Gastrocnemius medialis (tissue), 4 donors: ENCODE measurements at regions of chr20 and their contacts with region 1.

Region 1: DNA sequence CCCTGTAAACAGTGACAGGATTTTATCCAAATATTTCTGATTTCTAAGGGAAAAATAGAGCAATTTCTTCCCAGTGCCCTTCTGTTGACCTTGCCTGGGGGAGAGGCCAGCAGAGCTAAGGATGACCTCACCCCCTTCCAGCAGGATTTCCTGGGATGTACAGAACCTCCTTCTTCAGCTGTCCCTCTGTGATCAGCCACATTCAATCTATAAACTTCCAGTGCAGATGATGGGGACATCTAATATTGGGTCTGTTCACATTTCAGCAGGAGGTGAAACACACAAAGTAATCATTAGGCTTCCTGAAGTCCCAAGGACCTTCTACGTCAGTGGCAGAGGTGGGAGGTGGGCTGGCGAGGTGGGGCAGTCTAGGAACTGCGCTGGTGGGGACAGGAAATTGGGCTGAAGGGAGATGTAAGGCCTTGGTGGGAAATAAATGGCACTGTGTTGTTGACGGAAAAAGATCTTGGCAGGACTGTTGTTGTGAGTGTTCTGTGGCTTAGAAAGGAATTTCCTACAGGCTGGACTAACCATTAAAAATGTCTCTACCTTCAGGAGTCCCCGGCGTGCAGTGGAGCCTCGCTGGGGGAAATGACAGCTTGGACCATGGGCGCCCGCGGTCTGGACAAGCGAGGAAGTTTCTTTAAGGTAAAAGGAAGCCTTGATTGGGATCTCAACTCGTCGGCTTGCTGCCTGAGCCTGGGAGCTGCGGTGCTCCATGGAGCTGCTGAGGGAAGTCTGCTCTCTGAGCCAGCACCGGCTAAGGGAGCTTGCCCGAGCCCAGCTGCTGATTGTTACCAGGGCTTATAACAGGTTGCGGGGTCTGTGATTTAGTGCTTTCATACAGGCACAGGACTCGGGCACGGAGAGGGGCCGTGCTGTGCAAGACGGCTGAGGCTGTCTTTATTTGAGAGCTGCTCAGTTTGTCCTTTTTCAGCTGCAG is 127.9 kb upstream of the NAA20 start:
- DNase-seq: peak in 1 of 2 donors; percentile 28
- ATAC-seq: peak; percentile 72 to 82
- H3K4me3 ChIP-seq: peak overlapping the region; percentile 36 to 42 (median 39)
- H3K27ac ChIP-seq: peak overlapping the region; percentile 67 to 80 (median 77)
- H3K4me1 ChIP-seq: peaks cover 50 to 64% of the 10 kb centered on the region in 2 donors
- H3K27me3 ChIP-seq: no peaks in the 10 kb centered on the region
- CTCF ChIP-seq: no peak
- POLR2A ChIP-seq: no peak

Region 2: GRCh38 chr20:19823971-19824370 is 65.3 kb before region 1 on chr20:
- in situ Hi-C with region 1: no loop called
- intact Hi-C with region 1: loop called (anchors 5 kb)
- DNase-seq: no peak
- ATAC-seq: peak; percentile 56 to 72
- H3K4me3 ChIP-seq: peak overlapping the region in 1 of 4 donors; percentile 5
- H3K27ac ChIP-seq: peak overlapping the region; percentile 41 to 66 (median 60)
- H3K4me1 ChIP-seq: peaks cover 3 to 32% of the 10 kb centered on the region in 2 donors
- H3K27me3 ChIP-seq: no peaks in the 10 kb centered on the region
- CTCF ChIP-seq: no peak
- POLR2A ChIP-seq: peak in 1 of 2 donors; percentile 8

Region 3: DNA sequence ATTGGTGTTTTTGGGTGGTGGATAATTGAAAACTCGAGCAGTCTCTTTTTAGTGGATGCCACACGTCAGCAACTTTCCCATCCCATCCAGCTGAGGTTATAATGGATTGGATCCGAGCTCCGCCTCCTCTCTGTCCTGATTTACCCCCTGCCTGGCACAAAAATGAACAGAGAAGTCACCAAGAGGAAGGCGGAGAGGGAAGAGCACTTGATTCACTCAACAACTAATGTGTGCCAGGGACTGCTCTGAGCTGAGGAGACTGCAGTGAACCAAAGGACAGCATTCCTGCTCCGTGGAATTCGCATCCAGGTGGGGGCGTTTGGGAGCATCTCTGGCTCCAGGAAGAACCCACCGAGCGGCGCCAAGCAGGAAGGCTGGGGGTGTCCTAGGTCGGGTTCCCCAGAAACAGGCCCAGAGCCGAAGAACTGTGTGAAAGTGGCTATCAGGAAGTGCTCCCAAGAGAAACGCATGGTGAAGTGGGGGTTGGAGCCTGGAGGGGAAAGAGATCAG is 32.1 kb after region 1 on chr20:
- in situ Hi-C with region 1: no loop called
- intact Hi-C with region 1: loop called (anchors 2 kb)
- DNase-seq: peak; percentile 49 to 81
- ATAC-seq: peak; percentile 89 to 90
- H3K4me3 ChIP-seq: peak overlapping the region; percentile 18 to 42 (median 32)
- H3K27ac ChIP-seq: peak overlapping the region; percentile 73 to 87 (median 82)
- H3K4me1 ChIP-seq: peaks cover 56 to 67% of the 10 kb centered on the region in 2 donors
- H3K27me3 ChIP-seq: no peaks in the 10 kb centered on the region
- CTCF ChIP-seq: no peak
- POLR2A ChIP-seq: no peak

Region 4: GRCh38 chr20:19934792-19935491 is 45.7 kb after region 1 on chr20:
- in situ Hi-C with region 1: loop called in 1 of 4 experiments (anchors 10 kb)
- intact Hi-C with region 1: loop called (anchors 5 kb)
- DNase-seq: peak; percentile 61 to 70
- ATAC-seq: peak; percentile 74 to 82
- H3K4me3 ChIP-seq: peak overlapping the region; percentile 24 to 45 (median 34)
- H3K27ac ChIP-seq: peak overlapping the region; percentile 77 to 83 (median 77)
- H3K4me1 ChIP-seq: peaks cover 27 to 58% of the 10 kb centered on the region in 2 donors
- H3K27me3 ChIP-seq: no peaks in the 10 kb centered on the region
- CTCF ChIP-seq: no peak
- POLR2A ChIP-seq: peak; percentile 27 to 53

Region 5: DNA sequence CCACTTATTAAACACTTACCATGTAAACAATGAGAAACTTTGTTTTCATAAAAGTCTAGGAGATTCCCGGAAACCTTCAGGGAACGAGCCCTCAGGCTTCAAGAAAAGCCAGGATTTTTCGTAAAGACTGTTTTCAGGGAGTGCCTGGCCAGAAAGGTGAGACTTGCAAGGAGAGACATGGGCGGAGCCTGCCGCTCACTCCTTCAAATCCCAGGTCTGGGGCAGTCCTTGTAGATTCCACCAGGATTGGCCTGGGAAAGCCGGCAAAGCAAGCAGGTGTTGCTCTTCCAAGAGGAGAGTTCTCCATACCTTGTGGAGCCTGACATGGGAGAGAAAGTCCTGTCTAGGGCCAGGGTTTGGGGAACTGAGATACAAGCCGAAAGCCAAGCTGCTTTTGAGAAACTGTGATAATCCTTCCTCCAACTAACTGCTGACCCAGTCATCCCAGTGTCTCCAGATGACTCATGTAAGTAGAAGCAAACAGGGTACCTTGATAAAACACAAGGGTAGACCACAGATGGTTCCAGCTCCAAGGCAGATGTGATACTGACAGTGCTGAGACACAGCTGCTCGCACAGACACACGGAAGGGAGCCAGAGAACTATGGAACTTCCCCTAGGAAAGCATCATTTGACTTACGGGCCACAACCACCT is 58.5 kb after region 1 on chr20:
- in situ Hi-C with region 1: loop called in 1 of 4 experiments (anchors 10 kb)
- intact Hi-C with region 1: no loop called
- DNase-seq: no peak
- ATAC-seq: no peak
- H3K4me3 ChIP-seq: no peak overlapping the region
- H3K27ac ChIP-seq: no peak overlapping the region
- H3K4me1 ChIP-seq: peaks cover 18 to 38% of the 10 kb centered on the region in 2 donors
- H3K27me3 ChIP-seq: no peaks in the 10 kb centered on the region
- CTCF ChIP-seq: no peak
- POLR2A ChIP-seq: no peak

Region 6: DNA sequence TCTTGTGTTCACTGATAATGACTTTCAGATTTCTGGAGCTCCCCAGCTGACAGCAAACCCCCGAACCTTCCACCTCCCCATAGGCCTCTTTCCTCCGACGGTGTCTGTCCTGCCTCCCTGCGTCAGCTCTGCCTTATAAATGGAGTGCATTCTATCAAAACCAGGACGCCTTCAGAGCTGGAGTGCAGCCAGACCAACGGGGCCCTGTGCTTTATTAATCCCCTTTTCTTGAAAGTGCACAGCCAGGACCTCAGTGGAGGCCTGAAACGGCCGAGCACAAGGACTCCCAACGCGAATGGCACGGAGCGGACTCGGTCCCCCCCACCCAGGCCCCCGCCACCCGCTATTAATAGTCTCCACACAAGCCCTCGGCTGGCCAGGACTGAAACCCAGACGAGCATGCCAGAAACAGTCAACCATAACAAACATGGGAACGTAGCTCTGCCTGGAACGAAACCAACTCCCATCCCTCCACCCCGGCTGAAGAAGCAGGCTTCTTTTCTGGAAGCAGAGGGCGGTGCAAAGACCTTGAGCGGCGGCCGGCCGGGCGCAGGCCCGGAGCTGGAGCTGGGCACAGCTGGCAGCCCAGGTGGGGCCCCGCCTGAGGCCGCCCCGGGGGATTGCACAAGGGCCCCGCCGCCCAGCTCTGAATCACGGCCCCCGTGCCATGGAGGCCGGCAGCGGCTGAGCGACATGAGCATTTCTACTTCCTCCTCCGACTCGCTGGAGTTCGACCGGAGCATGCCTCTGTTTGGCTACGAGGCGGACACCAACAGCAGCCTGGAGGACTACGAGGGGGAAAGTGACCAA is 85.5 kb after region 1 on chr20:
- in situ Hi-C with region 1: no loop called
- intact Hi-C with region 1: loop called (anchors 5 kb)
- DNase-seq: peak; percentile 82 to 90
- ATAC-seq: peak; percentile 73 to 77
- H3K4me3 ChIP-seq: peak overlapping the region; percentile 54 to 65 (median 61)
- H3K27ac ChIP-seq: peak overlapping the region; percentile 86 to 95 (median 94)
- H3K4me1 ChIP-seq: peaks cover 62 to 63% of the 10 kb centered on the region in 2 donors
- H3K27me3 ChIP-seq: no peaks in the 10 kb centered on the region
- CTCF ChIP-seq: peak in 1 of 5 experiments; percentile 8
- POLR2A ChIP-seq: peak; percentile 19 to 62

Region 7: GRCh38 chr20:19995220-19995863 is 106.1 kb after region 1 on chr20:
- in situ Hi-C with region 1: no loop called
- intact Hi-C with region 1: loop called (anchors 5 kb)
- DNase-seq: no peak
- ATAC-seq: no peak
- H3K4me3 ChIP-seq: no peak overlapping the region
- H3K27ac ChIP-seq: peak overlapping the region; percentile 78 to 91 (median 80)
- H3K4me1 ChIP-seq: peaks cover 58 to 81% of the 10 kb centered on the region in 2 donors
- H3K27me3 ChIP-seq: no peaks in the 10 kb centered on the region
- CTCF ChIP-seq: peak; percentile 71 to 85 (median 83)
- POLR2A ChIP-seq: no peak